Activated naive CD8-positive, alpha-beta T cell treated with anti-CD3 and anti-CD28 coated beads, Interleukin-2, amount 10 ng/mL, durations not matched to agents 7 days and 5 days (primary cell): ENCODE measurements at regions of chr2 and their contacts with region 1.

Region 1: DNA sequence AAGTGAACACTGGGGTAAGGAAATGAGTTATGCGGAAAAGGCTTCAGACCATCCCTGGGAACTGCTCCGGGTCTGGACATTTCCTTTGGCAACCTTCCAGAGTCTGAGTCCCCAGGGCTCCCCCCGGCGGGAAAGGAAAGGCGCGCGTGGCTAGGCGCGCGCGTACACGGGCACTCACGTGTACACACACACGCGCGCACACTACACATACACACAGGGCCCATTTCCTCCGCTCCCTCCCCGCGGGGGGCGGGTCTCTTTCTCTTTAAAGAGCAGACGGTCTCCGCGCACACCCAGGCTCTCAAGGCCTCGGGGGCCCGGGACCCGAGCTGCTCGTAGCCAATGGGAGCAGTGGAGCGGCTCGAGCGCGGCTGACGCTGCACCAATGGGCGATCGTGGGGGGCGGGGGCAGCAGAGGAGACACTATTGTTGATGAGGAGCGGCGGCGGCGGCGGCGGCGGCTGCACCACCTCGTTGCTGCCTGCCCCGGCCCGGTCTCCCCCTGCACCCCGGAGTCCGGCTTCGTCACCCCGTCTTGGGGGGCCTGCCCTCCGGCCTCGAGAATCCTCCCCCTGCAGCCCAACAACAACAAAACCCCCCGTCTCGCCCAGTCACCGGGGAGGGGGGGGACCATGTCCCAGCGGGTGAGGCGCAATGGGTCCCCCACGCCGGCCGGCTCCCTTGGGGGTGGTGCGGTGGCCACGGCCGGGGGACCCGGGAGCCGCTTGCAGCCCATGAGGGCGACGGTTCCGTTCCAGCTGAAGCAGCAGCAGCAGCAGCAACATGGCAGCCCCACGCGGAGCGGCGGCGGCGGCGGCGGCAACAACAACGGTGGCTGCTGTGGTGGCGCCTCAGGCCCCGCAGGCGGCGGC is at the start of gene FAM117B:
- DNase-seq: peak; percentile 96
- ATAC-seq: peak; percentile 93
- H3K4me3 Mint-ChIP-seq: peak within 1 kb of the TSS; percentile 97
- H3K27ac Mint-ChIP-seq: peak within 1 kb of the TSS; percentile 95
- H3K4me1 Mint-ChIP-seq: peaks cover 36% of the 10 kb centered on the region
- H3K27me3 Mint-ChIP-seq: no peaks in the 10 kb centered on the region
- total RNA-seq, gene FAM117B: 22.1 to 23.1 TPM

Region 2: DNA sequence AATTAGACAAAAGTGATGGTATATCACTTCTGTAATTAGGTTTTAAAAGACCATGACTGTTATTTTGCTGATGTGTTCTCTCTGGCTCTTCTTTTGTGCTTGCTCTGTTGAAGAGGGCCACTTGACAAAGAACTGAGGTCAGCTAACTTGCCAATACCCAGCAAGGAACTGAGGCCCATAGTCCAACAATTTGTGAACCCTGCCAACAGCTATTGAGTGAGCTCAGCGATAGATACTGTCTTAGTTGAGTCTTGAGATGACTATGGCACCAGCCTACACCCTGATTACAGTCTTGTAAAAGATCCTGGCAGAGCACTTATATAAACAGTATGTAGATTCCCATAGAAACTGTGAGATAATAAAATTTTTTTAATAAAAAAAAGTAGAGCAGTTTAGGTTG is 155.7 kb before region 1 on chr2:
- POLR2A ChIA-PET with region 1: no interaction called
- DNase-seq: no peak
- ATAC-seq: no peak
- H3K4me3 Mint-ChIP-seq: no peak overlapping the region
- H3K27ac Mint-ChIP-seq: no peak overlapping the region
- H3K4me1 Mint-ChIP-seq: peaks cover 3% of the 10 kb centered on the region
- H3K27me3 Mint-ChIP-seq: no peaks in the 10 kb centered on the region

Region 3: DNA sequence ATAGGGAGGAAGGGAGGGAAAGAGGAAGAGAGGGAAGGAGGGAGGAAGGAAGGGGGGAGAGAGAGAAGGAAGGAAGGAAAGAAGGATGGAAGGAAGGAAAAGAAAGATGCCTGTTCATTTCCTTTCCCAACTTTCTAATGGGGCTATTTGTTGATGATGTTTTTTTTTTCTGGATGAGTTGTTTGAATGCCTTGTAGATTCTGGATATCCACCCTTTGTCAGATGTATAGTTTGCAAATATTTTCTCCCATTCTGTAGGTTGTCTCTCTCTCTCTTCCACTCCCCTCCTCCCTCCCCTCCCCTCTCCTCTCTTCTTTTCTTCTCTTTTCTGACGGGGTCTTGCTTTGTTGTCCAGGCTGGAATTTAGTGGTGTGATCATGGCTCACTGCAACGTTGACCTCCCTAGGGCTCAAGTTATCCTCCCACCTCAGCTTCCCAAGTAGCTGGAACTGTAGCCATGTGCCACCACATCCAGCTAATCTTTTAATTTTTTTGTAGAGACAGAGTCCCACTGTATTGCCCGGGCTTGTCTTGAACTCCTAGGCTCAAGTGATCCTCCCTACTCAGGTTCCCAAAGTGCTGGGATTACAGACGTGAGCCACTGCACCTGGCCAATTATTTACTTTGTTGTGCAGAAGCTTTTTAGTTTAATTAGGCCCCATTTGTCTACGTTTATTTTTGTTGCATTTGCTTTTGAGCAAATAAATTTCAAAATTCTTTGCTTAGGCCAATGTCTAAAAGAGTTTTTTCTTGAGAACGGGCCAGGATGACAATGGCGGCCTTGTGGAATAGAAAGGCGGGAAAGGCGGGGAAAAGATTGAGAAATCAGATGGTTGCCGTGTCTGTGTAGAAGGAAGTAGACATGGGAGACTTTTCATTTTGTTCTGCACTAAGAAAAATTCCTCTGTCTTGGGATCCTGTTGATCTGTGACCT is 57.3 kb before region 1 on chr2:
- POLR2A ChIA-PET with region 1: no interaction called
- DNase-seq: no peak
- ATAC-seq: no peak
- H3K4me3 Mint-ChIP-seq: no peak overlapping the region
- H3K27ac Mint-ChIP-seq: no peak overlapping the region
- H3K4me1 Mint-ChIP-seq: no peaks in the 10 kb centered on the region
- H3K27me3 Mint-ChIP-seq: peaks cover 5% of the 10 kb centered on the region

Region 4: GRCh38 chr2:202588647-202589581 is 45.9 kb before region 1 on chr2:
- POLR2A ChIA-PET with region 1: interaction called, 16 read pairs
- DNase-seq: peak; percentile 52
- ATAC-seq: peak; percentile 96
- H3K4me3 Mint-ChIP-seq: peak overlapping the region; percentile 60
- H3K27ac Mint-ChIP-seq: peak overlapping the region; percentile 88
- H3K4me1 Mint-ChIP-seq: peaks cover 7% of the 10 kb centered on the region
- H3K27me3 Mint-ChIP-seq: no peaks in the 10 kb centered on the region

Region 5: GRCh38 chr2:202624133-202624532 is 10.7 kb before region 1 on chr2:
- POLR2A ChIA-PET with region 1: no interaction called
- DNase-seq: no peak
- ATAC-seq: no peak
- H3K4me3 Mint-ChIP-seq: no peak overlapping the region
- H3K27ac Mint-ChIP-seq: no peak overlapping the region
- H3K4me1 Mint-ChIP-seq: no peaks in the 10 kb centered on the region
- H3K27me3 Mint-ChIP-seq: no peaks in the 10 kb centered on the region

Region 6: DNA sequence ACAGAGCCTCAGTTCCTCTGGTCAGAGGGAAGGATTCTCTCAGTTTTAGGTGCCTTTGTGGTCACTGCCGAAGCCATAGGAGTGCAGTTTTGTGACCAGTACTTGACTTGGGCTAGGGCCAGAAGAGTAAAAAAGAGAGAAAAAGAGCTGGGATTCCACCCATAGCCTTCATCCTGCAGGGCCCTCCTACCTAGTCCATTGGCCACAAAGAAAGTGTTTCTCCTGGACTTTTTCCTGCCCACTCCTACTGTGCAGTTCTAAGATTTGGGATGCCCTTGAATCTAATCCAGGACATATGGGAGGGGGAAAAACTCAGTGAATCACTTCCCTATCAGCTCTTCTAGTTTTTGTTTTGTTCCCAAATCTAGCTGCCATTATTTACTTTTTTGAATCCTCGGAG is 26.0 kb after region 1 on chr2:
- POLR2A ChIA-PET with region 1: interaction called, 23 read pairs
- DNase-seq: no peak
- ATAC-seq: no peak
- H3K4me3 Mint-ChIP-seq: no peak overlapping the region
- H3K27ac Mint-ChIP-seq: no peak overlapping the region
- H3K4me1 Mint-ChIP-seq: peaks cover 53% of the 10 kb centered on the region
- H3K27me3 Mint-ChIP-seq: no peaks in the 10 kb centered on the region

Region 7: DNA sequence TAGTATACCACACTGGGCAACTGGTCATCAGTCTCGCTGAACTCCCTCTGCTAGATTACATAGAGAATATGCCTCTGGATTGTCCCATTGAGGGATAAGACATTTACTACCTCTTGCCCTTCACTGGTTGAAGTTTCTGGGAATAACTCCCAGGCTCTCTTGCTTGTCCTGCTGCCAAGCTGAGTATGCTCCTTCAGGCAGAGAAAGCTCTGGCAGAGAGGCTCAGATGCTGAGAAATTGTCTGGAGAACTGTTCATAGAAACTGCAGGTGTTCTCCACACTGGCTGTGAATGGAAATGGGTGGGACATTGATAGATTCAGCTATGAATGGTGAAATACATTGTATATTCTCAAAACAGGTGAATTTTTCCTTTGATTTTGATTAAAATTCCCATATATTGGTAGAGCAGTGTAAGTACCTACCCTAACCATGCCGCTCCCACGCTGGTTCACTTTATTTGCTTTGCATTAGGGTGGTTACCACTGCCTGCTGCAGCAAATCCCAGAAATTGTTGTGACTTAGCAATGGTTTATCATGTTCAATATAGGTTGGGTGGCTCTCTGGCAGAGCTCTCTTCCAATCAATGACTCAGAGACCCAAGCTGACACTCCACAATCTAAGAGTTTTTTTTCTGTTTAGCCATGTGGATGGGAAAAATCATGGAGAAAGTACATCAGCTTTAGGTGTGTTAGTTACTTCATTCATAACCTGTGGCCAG is 36.7 kb after region 1 on chr2:
- POLR2A ChIA-PET with region 1: interaction called, 42 read pairs
- DNase-seq: no peak
- ATAC-seq: no peak
- H3K4me3 Mint-ChIP-seq: no peak overlapping the region
- H3K27ac Mint-ChIP-seq: no peak overlapping the region
- H3K4me1 Mint-ChIP-seq: peaks cover 60% of the 10 kb centered on the region
- H3K27me3 Mint-ChIP-seq: no peaks in the 10 kb centered on the region

Region 8: DNA sequence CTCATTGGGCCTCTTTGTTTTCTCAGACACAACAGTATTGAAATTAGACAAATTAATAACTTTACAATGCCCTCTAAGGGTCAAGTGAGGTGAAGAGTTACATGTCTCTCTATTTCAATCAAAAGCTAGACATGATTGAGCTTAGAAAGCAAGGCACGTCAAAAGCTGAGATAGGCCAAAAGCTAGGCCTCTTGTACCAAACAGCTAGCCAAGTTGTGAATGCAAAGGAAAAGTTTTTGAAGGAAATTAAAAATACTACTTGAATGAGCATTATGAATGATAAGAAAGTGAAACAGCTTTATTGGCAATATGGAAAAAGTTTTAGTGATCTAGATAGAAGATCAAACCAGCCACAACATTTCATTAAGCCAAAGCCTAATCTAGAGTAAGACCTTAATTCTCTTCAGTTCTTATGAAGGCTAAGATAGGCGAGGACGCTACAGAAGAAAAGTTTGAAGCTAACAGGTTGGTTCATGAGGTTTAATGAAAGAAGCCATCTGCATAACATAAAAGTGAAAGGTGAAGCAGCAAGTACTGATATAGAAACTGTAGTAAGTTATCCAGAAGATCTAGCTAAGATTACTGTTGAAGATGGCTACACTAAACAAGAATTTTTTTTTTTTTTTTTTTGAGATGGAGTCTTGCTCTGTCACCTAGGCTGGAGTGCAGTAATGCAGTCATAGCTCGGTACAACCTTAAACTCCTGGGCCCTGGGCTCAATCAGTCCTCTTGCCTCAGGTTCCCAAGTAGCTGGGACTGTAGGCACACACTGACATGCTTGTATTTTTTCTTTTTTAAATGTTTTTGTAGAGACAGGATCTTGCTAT is 65.5 kb after region 1 on chr2:
- POLR2A ChIA-PET with region 1: interaction called, 24 read pairs
- DNase-seq: no peak
- ATAC-seq: peak; percentile 53
- H3K4me3 Mint-ChIP-seq: peak overlapping the region; percentile 53
- H3K27ac Mint-ChIP-seq: peak overlapping the region; percentile 78
- H3K4me1 Mint-ChIP-seq: peaks cover 40% of the 10 kb centered on the region
- H3K27me3 Mint-ChIP-seq: no peaks in the 10 kb centered on the region

Region 9: GRCh38 chr2:202870431-202871299 is 235.9 kb after region 1 on chr2:
- POLR2A ChIA-PET with region 1: interaction called, 18 read pairs
- DNase-seq: peak; percentile 68
- ATAC-seq: peak; percentile 86
- H3K4me3 Mint-ChIP-seq: peak overlapping the region; percentile 90
- H3K27ac Mint-ChIP-seq: peak overlapping the region; percentile 76
- H3K4me1 Mint-ChIP-seq: peaks cover 11% of the 10 kb centered on the region
- H3K27me3 Mint-ChIP-seq: peaks cover 4% of the 10 kb centered on the region

Region 10: DNA sequence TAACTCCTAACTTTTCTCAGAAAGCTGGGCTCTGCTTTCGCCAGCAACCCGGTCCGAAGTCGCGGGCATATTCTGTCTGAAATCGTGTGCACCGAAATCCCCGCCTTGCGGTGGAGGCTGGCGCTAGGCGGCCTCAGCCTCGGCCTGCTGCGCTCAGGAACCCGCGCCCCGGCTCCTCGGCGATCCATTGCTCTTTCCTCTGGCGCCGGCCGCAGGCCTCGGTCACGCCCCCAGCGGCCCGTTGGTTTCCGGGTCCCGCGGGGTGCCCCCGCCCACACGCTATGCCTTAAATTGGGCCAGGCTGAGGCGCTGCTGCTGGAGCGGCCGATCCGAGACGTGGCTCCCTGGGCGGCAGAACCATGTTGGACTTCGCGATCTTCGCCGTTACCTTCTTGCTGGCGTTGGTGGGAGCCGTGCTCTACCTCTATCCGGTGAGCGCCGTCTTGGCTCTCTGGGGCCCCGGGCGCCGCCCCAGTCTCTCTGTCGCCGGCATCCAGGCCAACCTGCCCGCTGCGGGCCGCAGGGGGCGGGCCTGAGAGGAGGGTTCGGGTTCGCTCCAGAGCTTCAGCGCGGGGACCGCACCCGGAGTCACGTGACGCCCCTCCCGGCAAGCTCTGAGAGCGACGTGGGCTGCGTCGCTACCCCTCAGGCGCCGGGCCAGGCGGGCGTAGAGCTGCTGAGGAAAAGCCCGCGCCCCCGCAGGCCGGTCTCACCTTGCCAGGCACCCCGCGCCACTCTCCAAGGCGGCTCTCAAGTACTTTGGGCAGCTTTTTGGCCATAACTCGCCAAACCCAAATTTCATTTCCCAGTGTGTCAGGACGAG is 604.1 kb after region 1 on chr2 and contains the start of gene CYP20A1:
- POLR2A ChIA-PET with region 1: interaction called, 14 read pairs
- DNase-seq: peak; percentile 99
- ATAC-seq: peak; percentile 88
- H3K4me3 Mint-ChIP-seq: peak within 1 kb of the TSS; percentile 93
- H3K27ac Mint-ChIP-seq: peak within 1 kb of the TSS; percentile 99
- H3K4me1 Mint-ChIP-seq: peaks cover 19% of the 10 kb centered on the region
- H3K27me3 Mint-ChIP-seq: no peaks in the 10 kb centered on the region
- total RNA-seq, gene CYP20A1: 18.3 to 22.6 TPM